ENCODE measurements at regions of chr1 and their contacts with region 1.

Region 1: DNA sequence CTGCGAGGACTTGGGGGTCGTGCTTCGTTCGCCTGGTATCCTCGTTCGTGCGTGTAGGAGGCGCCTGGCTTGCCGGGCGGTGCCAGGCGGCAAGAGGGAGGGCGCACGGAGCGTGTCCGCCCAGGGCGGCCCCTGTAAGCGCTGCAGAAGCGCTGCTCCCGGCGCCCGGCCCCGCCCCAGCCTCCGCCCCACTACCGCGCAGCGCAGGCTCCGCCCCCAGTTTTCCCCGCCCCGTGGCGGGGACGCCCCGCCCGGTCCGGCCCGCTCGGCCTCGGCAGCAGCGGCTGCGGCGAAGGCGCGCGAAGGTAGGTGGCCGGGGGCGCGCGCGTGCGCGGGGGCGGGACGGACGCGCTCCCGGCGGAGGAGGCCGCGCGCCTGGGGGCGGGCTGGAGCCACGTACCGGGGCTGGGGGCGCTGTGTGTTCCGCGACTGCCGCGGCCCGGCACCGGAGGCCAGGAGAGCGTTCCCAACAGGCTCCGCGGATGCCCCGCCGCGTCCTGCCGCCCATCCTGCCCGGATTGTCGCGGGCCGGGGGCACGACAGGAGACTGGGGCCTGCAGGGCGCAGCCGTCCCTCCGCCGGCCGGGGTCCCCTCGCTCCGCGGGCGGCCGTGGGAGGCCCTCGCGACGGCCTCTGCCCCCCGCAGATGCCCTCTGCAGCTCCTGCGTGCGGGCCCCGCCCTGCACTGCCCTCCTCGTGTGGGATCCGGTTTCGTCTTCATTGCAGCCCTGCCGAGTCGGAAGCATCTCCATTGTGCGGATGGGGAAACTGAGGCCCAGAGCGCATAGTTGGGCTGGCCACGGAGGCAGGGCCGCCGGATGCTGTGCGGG is 7.7 kb upstream of the CROCC start:
- DNase-seq: peak; percentile 96
- ATAC-seq: peak; percentile 96
- H3K4me3 Mint-ChIP-seq: peak overlapping the region; percentile 89
- H3K27ac Mint-ChIP-seq: peak overlapping the region; percentile 83
- H3K4me1 Mint-ChIP-seq: peaks cover 31% of the 10 kb centered on the region
- H3K27me3 Mint-ChIP-seq: no peaks in the 10 kb centered on the region

Region 2: DNA sequence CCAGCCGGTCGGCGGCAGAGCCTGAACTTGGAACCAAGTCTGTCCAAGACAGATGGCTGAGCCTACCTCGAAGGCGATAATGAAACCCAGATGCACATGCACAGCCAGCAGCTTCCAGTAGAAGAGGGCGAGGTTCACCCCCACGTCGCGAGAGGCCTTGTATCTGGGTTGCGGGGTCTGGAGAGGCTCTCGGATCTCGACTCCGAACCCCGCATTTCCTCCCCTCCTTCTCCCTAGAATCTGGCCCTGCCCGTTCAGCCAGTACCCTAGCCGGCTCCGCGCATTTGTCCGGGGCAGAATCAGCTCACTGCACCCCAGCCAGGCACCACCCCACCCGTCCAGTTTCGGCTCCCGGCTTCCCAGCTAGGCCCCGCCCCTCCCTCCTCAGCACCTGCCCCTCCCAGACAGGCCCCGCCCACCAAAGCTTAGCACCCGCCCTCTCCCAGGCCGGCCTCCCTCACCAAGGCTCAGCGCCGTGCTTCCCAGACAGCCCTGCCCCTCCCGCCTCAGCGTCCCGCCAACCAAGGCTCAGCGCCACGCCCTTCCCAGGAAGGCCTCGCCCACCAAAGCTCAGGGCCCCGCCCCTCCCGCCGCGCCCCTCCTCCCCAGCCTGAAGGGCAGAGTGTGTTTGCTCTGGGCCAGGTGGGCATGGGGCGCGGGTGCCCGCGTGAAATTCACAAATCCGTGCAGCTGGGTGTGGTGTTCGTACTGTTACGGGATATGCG is 696.8 kb before region 1 on chr1:
- CTCF ChIA-PET with region 1: no interaction called
- POLR2A ChIA-PET with region 1: no interaction called
- intact Hi-C with region 1: loop called in 1 of 2 experiments (anchors 5 kb)
- DNase-seq: peak; percentile 98
- ATAC-seq: peak; percentile 98
- H3K4me3 Mint-ChIP-seq: peak overlapping the region; percentile 73
- H3K27ac Mint-ChIP-seq: peak overlapping the region; percentile 20
- H3K4me1 Mint-ChIP-seq: peaks cover 20% of the 10 kb centered on the region
- H3K27me3 Mint-ChIP-seq: no peaks in the 10 kb centered on the region

Region 3: GRCh38 chr1:16498573-16499413 is 415.3 kb before region 1 on chr1:
- CTCF ChIA-PET with region 1: no interaction called
- POLR2A ChIA-PET with region 1: no interaction called
- intact Hi-C with region 1: loop called in 1 of 2 experiments (anchors 5 kb)
- DNase-seq: peak; percentile 91
- ATAC-seq: peak; percentile 94
- H3K4me3 Mint-ChIP-seq: peak overlapping the region; percentile 74
- H3K27ac Mint-ChIP-seq: no peak overlapping the region
- H3K4me1 Mint-ChIP-seq: peaks cover 10% of the 10 kb centered on the region
- H3K27me3 Mint-ChIP-seq: no peaks in the 10 kb centered on the region

Region 4: DNA sequence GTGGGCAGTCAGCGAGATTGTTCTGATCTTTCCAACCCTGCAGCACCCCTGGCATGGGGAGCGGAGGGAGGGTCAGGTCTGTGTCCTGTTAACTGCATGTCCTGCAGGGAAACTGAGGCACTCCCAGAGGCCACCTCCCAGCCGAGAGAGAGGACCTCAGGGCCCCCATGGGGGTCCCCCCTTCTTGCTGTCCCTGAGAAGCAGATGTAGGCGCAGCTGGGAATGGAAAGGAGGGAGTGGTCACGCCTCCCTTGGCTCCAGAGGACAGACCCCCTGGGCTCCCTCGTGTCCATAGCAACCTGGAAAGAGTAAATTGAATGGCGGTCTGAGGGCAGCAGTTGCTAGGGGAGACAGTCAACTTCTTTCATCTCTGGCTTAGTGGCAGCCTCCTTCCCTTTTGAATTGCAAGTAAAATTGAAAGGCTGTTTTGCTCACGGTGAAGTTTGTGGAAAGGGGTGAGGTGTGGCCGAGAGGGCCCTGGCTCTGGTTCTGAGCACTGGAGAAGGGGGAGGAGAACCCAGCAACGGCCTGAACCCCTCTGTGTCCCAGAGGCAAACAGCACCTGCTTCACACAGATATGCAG is 12.5 kb after region 1 on chr1:
- CTCF ChIA-PET with region 1: interaction called, 3 read pairs
- POLR2A ChIA-PET with region 1: no interaction called
- intact Hi-C with region 1: loop called in 1 of 2 experiments (anchors 1 kb)
- DNase-seq: no peak
- ATAC-seq: no peak
- H3K4me3 Mint-ChIP-seq: no peak overlapping the region
- H3K27ac Mint-ChIP-seq: no peak overlapping the region
- H3K4me1 Mint-ChIP-seq: peaks cover 8% of the 10 kb centered on the region
- H3K27me3 Mint-ChIP-seq: no peaks in the 10 kb centered on the region

Region 5: DNA sequence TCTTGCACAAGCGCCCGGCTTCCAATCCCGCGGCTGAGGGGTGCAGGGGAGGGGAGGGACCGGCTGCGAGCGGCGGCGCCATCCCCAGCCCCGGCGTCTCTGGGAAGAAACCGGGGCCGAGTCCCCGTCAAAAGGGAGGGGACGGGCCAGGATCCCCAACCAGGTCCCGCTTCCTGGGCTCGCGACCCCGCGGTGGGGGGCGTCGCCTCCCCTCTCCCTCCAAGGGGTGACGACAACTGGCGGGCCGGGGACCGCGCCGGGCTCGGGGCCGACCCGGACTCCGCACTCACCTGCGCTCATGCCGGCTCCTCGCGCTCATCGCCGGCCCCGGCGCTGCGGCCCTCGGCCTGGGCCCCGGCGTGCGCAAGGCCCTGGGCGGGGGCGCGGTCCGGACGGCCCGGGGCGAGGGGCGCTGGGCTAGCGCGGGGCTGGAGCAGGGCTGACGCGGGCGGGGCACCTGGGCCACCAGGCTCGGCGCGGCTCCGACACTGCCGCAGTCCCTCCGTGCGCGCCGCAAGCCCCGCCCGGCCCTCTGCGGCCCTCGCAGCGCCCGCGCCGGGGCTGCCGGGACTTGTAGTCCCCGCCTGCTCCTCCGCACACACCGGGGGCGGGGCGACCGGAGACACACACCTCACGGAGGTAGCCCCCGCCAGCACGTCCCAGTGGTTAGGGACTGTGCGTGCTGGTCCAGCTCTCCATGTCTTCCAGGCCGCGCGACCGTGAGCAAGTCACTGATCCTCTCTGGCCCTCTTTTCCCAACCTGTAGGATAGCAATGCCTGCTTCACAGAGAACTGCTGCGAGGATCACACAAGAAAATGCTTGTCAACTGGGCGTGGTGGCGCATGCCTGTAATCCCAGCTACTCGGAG is 97.6 kb after region 1 on chr1 and contains the start of gene ATP13A2:
- CTCF ChIA-PET with region 1: no interaction called
- POLR2A ChIA-PET with region 1: interaction called, 3 read pairs
- intact Hi-C with region 1: loop called in 1 of 2 experiments (anchors 1 kb)
- DNase-seq: peak; percentile 90
- ATAC-seq: peak; percentile 99
- H3K4me3 Mint-ChIP-seq: peak within 1 kb of the TSS; percentile 79
- H3K27ac Mint-ChIP-seq: peak within 1 kb of the TSS; percentile 55
- H3K4me1 Mint-ChIP-seq: peaks cover 20% of the 10 kb centered on the region
- H3K27me3 Mint-ChIP-seq: no peaks in the 10 kb centered on the region
- total RNA-seq, gene ATP13A2: 30.7 to 32.0 TPM

Region 6: DNA sequence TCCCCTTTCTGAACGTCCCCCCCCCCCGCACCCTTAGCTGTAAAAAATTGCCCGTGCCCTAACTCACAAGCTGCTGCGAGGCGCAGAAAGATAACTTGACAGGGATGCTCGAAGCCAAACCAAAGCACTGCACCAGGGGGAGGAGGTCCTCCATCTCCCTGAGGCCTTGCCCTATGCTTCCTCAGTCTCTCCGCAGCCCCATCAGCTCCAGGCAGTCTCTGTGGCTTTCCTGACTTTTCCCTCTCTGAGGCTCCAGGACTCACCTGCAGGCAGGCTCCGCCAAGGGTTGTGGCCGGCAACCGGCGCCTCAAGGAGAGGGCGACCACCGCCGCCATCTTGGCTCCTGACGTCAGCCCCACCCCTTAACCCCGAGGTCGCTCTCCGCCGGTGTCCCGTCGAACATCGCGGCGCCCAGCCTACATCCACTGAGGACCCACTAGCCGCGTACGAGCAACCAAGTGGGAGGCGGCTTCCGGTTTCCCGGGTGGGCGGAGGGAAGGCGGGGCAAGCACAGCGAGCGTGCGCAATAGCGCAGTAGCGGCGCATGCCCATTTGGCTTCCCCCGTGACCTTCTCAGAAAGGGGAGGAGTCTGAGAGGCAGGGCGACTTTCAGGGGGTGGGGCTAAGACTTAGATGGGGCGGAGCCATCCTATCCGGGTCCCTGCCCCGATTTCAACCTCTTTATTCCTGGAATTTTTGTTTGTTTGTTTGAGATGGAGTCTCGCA is 139.8 kb after region 1 on chr1 and contains the start of gene SDHB:
- CTCF ChIA-PET with region 1: no interaction called
- POLR2A ChIA-PET with region 1: no interaction called
- intact Hi-C with region 1: loop called in 1 of 2 experiments (anchors 1 kb)
- DNase-seq: peak; percentile 100
- ATAC-seq: peak; percentile 99
- H3K4me3 Mint-ChIP-seq: peak within 1 kb of the TSS; percentile 94
- H3K27ac Mint-ChIP-seq: peak within 1 kb of the TSS; percentile 97
- H3K4me1 Mint-ChIP-seq: peaks cover 21% of the 10 kb centered on the region
- H3K27me3 Mint-ChIP-seq: peaks cover 3% of the 10 kb centered on the region
- total RNA-seq, gene SDHB: 132 to 149 TPM

Measured in activated CD4-positive, alpha-beta T cell treated with anti-CD3 and anti-CD28 coated beads for 36 hours (primary cell).